B cell (primary cell): ENCODE measurements at regions of chr7 and their contacts with region 1.

Region 1: DNA sequence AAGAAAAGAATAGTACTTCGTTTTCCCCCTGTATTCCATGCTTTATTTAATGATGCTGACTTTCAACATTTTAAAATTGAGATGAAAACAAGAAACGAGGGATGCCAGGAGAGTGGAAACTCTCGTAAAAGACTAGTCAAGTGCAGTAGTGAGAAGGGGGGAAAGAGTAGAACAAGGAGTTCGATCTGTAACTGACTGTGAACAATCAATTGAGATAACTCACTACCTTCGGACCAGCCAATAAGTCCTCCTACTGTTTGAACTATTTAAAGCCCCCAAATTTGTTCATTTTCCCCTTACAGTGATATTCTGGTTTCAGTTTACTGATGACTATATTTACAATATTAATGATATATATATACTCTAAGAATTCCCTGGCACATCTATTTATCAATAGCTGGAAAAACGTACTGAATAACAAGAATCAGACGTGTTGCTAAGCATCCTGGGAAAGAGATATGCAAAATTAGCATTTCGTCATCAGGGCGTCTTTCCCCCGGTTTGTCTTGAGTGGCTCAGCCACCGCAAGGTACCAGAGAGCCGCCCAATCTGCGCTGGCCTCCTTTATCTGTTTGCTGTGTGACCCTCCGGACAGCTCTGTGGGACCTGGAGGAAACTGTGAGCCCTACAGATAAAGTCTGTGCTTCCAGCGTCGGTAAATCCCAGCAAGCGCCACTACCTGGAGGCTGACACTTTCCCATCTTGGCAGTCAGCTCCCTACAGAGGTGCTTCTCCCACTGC is 41.1 kb downstream of the PDIA4 start:
- DNase-seq: peak; percentile 92
- ATAC-seq: peak; percentile 87
- H3K4me3 ChIP-seq: peak overlapping the region; percentile 78 to 98 (median 89)
- H3K4me3 Mint-ChIP-seq: peak overlapping the region; percentile 99
- H3K27ac ChIP-seq: peak overlapping the region; percentile 84 to 90
- H3K27ac Mint-ChIP-seq: peak overlapping the region; percentile 94
- H3K4me1 ChIP-seq: peaks cover 39 to 43% of the 10 kb centered on the region in 2 donors
- H3K4me1 Mint-ChIP-seq: peaks cover 49% of the 10 kb centered on the region
- H3K27me3 ChIP-seq: no peaks in the 10 kb centered on the region
- H3K27me3 Mint-ChIP-seq: no peaks in the 10 kb centered on the region
- CTCF ChIP-seq: no peak

Region 2: DNA sequence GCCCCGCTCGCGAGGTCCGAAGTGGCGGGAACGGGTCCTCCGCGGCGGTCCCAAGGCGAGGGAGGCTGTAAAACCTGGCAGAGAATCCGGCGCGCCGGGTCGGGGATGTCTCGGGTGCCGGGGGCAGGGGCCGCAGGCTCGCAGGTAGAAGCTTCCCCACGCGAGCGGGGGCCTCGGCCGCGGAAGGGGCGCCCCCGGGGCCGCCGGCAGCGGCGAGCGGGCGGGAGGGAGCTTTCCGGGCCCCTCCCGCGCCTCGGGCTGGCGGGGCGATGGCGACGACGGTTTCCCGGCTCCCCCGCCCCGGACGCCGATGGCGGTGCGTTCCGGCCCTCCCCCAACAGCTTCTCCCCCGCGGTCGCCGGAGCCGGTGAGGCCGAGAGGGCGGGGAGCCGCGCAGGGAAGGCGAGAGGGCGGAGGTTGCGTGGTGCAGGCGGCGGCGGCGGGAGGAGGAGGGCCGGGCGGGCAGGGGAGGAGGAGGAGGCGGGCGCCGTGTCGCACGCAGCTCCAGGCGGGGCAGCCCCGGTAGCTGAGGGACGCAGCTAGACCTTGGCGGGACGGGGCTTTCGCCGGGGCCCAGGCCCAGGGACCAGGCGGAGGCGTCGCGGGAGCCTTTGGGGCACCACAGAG is 288.7 kb before region 1 on chr7 and contains the start of gene CUL1:
- CTCF ChIA-PET with region 1: no interaction called
- POLR2A ChIA-PET with region 1: interaction called, 5 read pairs
- intact Hi-C with region 1: loop called (anchors 5 kb)
- DNase-seq: peak; percentile 90
- ATAC-seq: peak; percentile 81
- H3K4me3 ChIP-seq: peak within 1 kb of the TSS; percentile 76 to 93 (median 84)
- H3K4me3 Mint-ChIP-seq: peak within 1 kb of the TSS; percentile 91
- H3K27ac ChIP-seq: peak within 1 kb of the TSS; percentile 69 to 91
- H3K27ac Mint-ChIP-seq: peak within 1 kb of the TSS; percentile 92
- H3K4me1 ChIP-seq: peaks cover 30 to 31% of the 10 kb centered on the region in 2 donors
- H3K4me1 Mint-ChIP-seq: peaks cover 46% of the 10 kb centered on the region
- H3K27me3 ChIP-seq: no peaks in the 10 kb centered on the region
- H3K27me3 Mint-ChIP-seq: no peaks in the 10 kb centered on the region
- CTCF ChIP-seq: no peak
- total RNA-seq, gene CUL1: 51.1 and 53.5 TPM in 2 replicates

Region 3: GRCh38 chr7:148940702-148941597 is 46.2 kb before region 1 on chr7:
- CTCF ChIA-PET with region 1: interaction called, 10 read pairs
- POLR2A ChIA-PET with region 1: no interaction called
- intact Hi-C with region 1: loop called (anchors 1 kb)
- DNase-seq: peak; percentile 91
- ATAC-seq: peak; percentile 80
- H3K4me3 ChIP-seq: peak overlapping the region; percentile 85 to 98 (median 89)
- H3K4me3 Mint-ChIP-seq: peak overlapping the region; percentile 95
- H3K27ac ChIP-seq: peak overlapping the region; percentile 77 to 88
- H3K27ac Mint-ChIP-seq: peak overlapping the region; percentile 97
- H3K4me1 ChIP-seq: peaks cover 6 to 12% of the 10 kb centered on the region in 2 donors
- H3K4me1 Mint-ChIP-seq: peaks cover 13% of the 10 kb centered on the region
- H3K27me3 ChIP-seq: no peaks in the 10 kb centered on the region
- H3K27me3 Mint-ChIP-seq: no peaks in the 10 kb centered on the region
- CTCF ChIP-seq: no peak

Region 4: GRCh38 chr7:149005241-149006050 is 18.3 kb after region 1 on chr7:
- CTCF ChIA-PET with region 1: interaction called, 64 read pairs
- POLR2A ChIA-PET with region 1: no interaction called
- intact Hi-C with region 1: no loop called
- DNase-seq: peak; percentile 86
- ATAC-seq: peak; percentile 93
- H3K4me3 ChIP-seq: no peak overlapping the region
- H3K4me3 Mint-ChIP-seq: no peak overlapping the region
- H3K27ac ChIP-seq: no peak overlapping the region
- H3K27ac Mint-ChIP-seq: no peak overlapping the region
- H3K4me1 ChIP-seq: peaks cover 0 to 7% of the 10 kb centered on the region in 2 donors
- H3K4me1 Mint-ChIP-seq: peaks cover 4% of the 10 kb centered on the region
- H3K27me3 ChIP-seq: no peaks in the 10 kb centered on the region
- H3K27me3 Mint-ChIP-seq: no peaks in the 10 kb centered on the region
- CTCF ChIP-seq: peak; percentile 90

Region 5: GRCh38 chr7:149071641-149072437 is 84.7 kb after region 1 on chr7:
- CTCF ChIA-PET with region 1: interaction called, 13 read pairs
- POLR2A ChIA-PET with region 1: interaction called, 3 read pairs
- intact Hi-C with region 1: loop called (anchors 5 kb)
- DNase-seq: peak; percentile 26
- ATAC-seq: peak; percentile 28
- H3K4me3 ChIP-seq: peak overlapping the region in 1 of 5 experiments; percentile 5
- H3K4me3 Mint-ChIP-seq: no peak overlapping the region
- H3K27ac ChIP-seq: no peak overlapping the region
- H3K27ac Mint-ChIP-seq: no peak overlapping the region
- H3K4me1 ChIP-seq: no peaks in the 10 kb centered on the region
- H3K4me1 Mint-ChIP-seq: peaks cover 3% of the 10 kb centered on the region
- H3K27me3 ChIP-seq: no peaks in the 10 kb centered on the region
- H3K27me3 Mint-ChIP-seq: no peaks in the 10 kb centered on the region
- CTCF ChIP-seq: peak; percentile 25

Region 6: GRCh38 chr7:149195180-149196150 is 208.3 kb after region 1 on chr7 and contains the start of gene ZNF282:
- CTCF ChIA-PET with region 1: no interaction called
- POLR2A ChIA-PET with region 1: no interaction called
- intact Hi-C with region 1: loop called (anchors 2 kb)
- DNase-seq: peak; percentile 81
- ATAC-seq: peak; percentile 84
- H3K4me3 ChIP-seq: peak within 1 kb of the TSS; percentile 60 to 92 (median 83)
- H3K4me3 Mint-ChIP-seq: peak within 1 kb of the TSS; percentile 89
- H3K27ac ChIP-seq: peak within 1 kb of the TSS; percentile 47 to 76
- H3K27ac Mint-ChIP-seq: peak within 1 kb of the TSS; percentile 81
- H3K4me1 ChIP-seq: peaks cover 14 to 18% of the 10 kb centered on the region in 2 donors
- H3K4me1 Mint-ChIP-seq: peaks cover 38% of the 10 kb centered on the region
- H3K27me3 ChIP-seq: no peaks in the 10 kb centered on the region
- H3K27me3 Mint-ChIP-seq: no peaks in the 10 kb centered on the region
- CTCF ChIP-seq: peak; percentile 58
- total RNA-seq, gene ZNF282: 25.7 and 26.8 TPM in 2 replicates

Region 7: GRCh38 chr7:150737265-150738055 is 1750.3 kb after region 1 on chr7 and contains the start of gene GIMAP5:
- CTCF ChIA-PET with region 1: no interaction called
- POLR2A ChIA-PET with region 1: no interaction called
- intact Hi-C with region 1: no loop called
- DNase-seq: no peak
- ATAC-seq: no peak
- H3K4me3 ChIP-seq: peak within 1 kb of the TSS; percentile 8 to 47 (median 35)
- H3K4me3 Mint-ChIP-seq: peak within 1 kb of the TSS; percentile 71
- H3K27ac ChIP-seq: no peak within 1 kb of the TSS
- H3K27ac Mint-ChIP-seq: no peak within 1 kb of the TSS
- H3K4me1 ChIP-seq: peaks cover 6 to 13% of the 10 kb centered on the region in 2 donors
- H3K4me1 Mint-ChIP-seq: peaks cover 8% of the 10 kb centered on the region
- H3K27me3 ChIP-seq: peaks cover 0 to 10% (median 4%) of the 10 kb centered on the region in 4 experiments
- H3K27me3 Mint-ChIP-seq: peaks cover 15% of the 10 kb centered on the region
- CTCF ChIP-seq: no peak
- total RNA-seq, gene GIMAP5: 0.10 and 0.27 TPM in 2 replicates